ENCODE measurements at regions of chr9 and their contacts with region 1.

Region 1: DNA sequence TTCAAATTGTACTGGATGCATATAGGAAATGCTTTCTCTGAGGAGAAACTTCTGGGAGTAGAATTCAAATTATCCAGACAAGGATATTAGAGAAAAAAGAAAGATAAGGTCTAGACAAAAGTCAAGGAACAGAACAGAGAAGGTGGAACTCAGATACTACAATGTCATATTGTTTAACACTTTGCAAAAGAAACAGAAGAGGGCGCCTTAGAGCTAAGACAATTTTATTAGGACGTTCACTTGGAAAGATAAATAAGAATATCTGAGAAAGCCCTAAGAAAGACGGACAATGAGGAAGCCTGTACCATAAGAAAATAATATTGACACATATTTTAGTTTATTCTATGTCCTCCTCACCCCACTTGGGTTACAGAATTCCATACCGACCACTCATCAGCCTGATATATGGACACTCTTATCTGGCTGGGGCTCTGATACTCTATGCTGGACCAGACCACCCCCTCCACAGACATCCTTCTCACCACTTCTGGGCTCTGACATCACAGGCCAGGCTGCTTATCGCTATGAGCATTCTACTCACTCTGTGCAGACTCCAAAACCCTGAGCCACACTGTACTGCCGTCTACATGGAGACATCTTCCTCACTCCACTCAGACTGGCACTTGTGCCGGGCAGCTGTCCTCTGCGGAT is 9.1 kb upstream of the AK3 start:
- DNase-seq: peak in 5 of 9 donors; percentile 28 to 40 (median 33)
- ATAC-seq: peak; percentile 73
- H3K4me3 ChIP-seq: no peak overlapping the region
- H3K4me3 Mint-ChIP-seq: no peak overlapping the region
- H3K27ac ChIP-seq: no peak overlapping the region
- H3K27ac Mint-ChIP-seq: no peak overlapping the region
- H3K4me1 ChIP-seq: no peaks in the 10 kb centered on the region
- H3K4me1 Mint-ChIP-seq: peaks cover 0 to 7% (median 4%) of the 10 kb centered on the region in 7 donors
- H3K27me3 ChIP-seq: no peaks in the 10 kb centered on the region
- H3K27me3 Mint-ChIP-seq: peaks cover 0 to 12% (median 0%) of the 10 kb centered on the region in 5 donors

Region 2: DNA sequence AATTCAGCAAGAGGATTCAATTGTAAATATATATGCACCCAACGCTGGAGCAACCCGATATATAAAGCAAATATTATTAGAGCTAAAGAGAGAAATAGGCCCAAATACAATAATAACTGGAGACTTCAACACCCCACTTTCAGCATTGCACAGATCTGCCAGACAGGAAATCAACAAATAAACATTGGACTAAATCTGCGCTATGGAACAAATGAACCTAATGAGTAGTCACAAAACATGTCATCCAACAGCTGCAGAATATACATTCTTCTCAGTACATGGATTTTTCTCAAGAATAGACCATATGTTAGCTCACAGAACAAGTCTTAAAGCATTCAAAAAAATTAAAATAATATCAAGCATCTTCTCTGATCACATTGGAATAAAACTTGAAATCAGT is 346.0 kb before region 1 on chr9:
- CTCF ChIA-PET with region 1: no interaction called
- POLR2A ChIA-PET with region 1: no interaction called
- intact Hi-C with region 1: no loop called
- DNase-seq: no peak
- ATAC-seq: no peak
- H3K4me3 ChIP-seq: no peak overlapping the region
- H3K4me3 Mint-ChIP-seq: no peak overlapping the region
- H3K27ac ChIP-seq: no peak overlapping the region
- H3K27ac Mint-ChIP-seq: no peak overlapping the region
- H3K4me1 ChIP-seq: no peaks in the 10 kb centered on the region
- H3K4me1 Mint-ChIP-seq: no peaks in the 10 kb centered on the region
- H3K27me3 ChIP-seq: no peaks in the 10 kb centered on the region
- H3K27me3 Mint-ChIP-seq: peaks cover 0 to 23% (median 9%) of the 10 kb centered on the region in 5 donors

Region 3: DNA sequence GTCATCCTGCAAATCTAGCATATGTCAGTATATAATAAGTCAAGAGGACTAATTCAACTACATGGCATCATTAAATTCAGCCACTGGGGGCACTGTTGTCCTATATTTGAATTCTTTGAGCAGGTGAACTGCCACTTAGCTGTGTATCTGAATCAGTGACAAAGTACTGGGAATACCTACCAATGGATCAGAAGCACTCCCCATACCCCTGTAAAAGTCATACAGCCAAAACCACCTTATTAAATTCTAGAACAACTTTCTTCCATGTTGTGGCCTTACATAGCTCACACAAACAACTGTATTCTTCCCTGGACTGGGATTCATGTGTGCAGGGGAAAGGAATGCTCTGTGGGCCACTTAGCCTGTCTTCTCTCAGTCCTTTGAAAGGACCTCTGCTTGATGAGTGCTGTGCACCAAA is 145.5 kb before region 1 on chr9:
- CTCF ChIA-PET with region 1: no interaction called
- POLR2A ChIA-PET with region 1: no interaction called
- intact Hi-C with region 1: loop called in 1 of 2 experiments (anchors 5 kb)
- DNase-seq: peak in 8 of 9 donors; percentile 38 to 77 (median 60)
- ATAC-seq: peak; percentile 88
- H3K4me3 ChIP-seq: peak overlapping the region; percentile 18
- H3K4me3 Mint-ChIP-seq: peak overlapping the region in 3 of 10 donors; percentile 40 to 53 (median 50)
- H3K27ac ChIP-seq: no peak overlapping the region
- H3K27ac Mint-ChIP-seq: peak overlapping the region in 6 of 9 donors; percentile 17 to 85 (median 82)
- H3K4me1 ChIP-seq: peaks cover 16 to 29% of the 10 kb centered on the region in 2 donors
- H3K4me1 Mint-ChIP-seq: peaks cover 12 to 52% (median 32%) of the 10 kb centered on the region in 7 donors
- H3K27me3 ChIP-seq: no peaks in the 10 kb centered on the region
- H3K27me3 Mint-ChIP-seq: no peaks in the 10 kb centered on the region

Region 4: GRCh38 chr9:5263351-5264218 is 513.4 kb after region 1 on chr9:
- CTCF ChIA-PET with region 1: no interaction called
- POLR2A ChIA-PET with region 1: no interaction called
- intact Hi-C with region 1: loop called in 1 of 2 experiments (anchors 10 kb)
- DNase-seq: peak in 5 of 9 donors; percentile 1 to 23 (median 4)
- ATAC-seq: no peak
- H3K4me3 ChIP-seq: no peak overlapping the region
- H3K4me3 Mint-ChIP-seq: peak overlapping the region in 6 of 10 donors; percentile 23 to 36 (median 30)
- H3K27ac ChIP-seq: no peak overlapping the region
- H3K27ac Mint-ChIP-seq: peak overlapping the region in 2 of 9 donors; percentile 0 to 19
- H3K4me1 ChIP-seq: no peaks in the 10 kb centered on the region
- H3K4me1 Mint-ChIP-seq: peaks cover 9 to 24% (median 17%) of the 10 kb centered on the region in 7 donors
- H3K27me3 ChIP-seq: no peaks in the 10 kb centered on the region
- H3K27me3 Mint-ChIP-seq: no peaks in the 10 kb centered on the region